CD14-positive monocyte (primary cell): ENCODE measurements at regions of chr17 and their contacts with region 1.

Region 1: DNA sequence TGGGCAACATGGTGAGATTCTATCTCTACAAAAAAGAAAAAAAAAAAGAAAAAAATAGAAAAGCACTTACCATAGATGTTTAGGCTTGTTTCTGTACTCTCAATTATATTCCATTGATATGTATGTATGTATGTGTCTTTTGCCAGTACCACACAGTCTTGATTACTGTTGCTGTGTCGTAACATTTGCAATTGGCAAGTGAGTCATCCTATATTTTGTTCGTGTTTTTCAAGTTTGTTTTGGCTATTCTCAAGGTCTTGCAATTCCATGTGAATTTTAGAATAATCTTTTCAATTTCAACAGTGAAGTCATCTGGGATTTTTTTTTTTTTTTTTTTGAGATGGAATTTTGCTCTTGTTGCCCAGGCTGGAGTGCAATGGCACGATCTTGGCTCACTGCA is 19.3 kb downstream of the SPECC1 start:
- DNase-seq: peak; percentile 57 to 75 (median 64)
- H3K4me3 ChIP-seq: no peak overlapping the region
- H3K4me3 Mint-ChIP-seq: no peak overlapping the region
- H3K27ac ChIP-seq: no peak overlapping the region
- H3K27ac Mint-ChIP-seq: peak overlapping the region in 1 of 7 donors; percentile 69
- H3K4me1 ChIP-seq: peaks cover 29 to 50% of the 10 kb centered on the region in 2 donors
- H3K4me1 Mint-ChIP-seq: peaks cover 44% of the 10 kb centered on the region
- H3K27me3 ChIP-seq: no peaks in the 10 kb centered on the region
- H3K27me3 Mint-ChIP-seq: peaks cover 0 to 1% (median 0%) of the 10 kb centered on the region in 3 donors
- CTCF ChIP-seq: no peak

Region 2: GRCh38 chr17:20063665-20064648 is 35.5 kb after region 1 on chr17:
- intact Hi-C with region 1: loop called (anchors 5 kb)
- DNase-seq: peak; percentile 79 to 89 (median 89)
- H3K4me3 ChIP-seq: peak overlapping the region; percentile 10 to 61 (median 27)
- H3K4me3 Mint-ChIP-seq: peak overlapping the region; percentile 67 to 89
- H3K27ac ChIP-seq: peak overlapping the region; percentile 82 to 87
- H3K27ac Mint-ChIP-seq: peak overlapping the region; percentile 93 to 99 (median 96)
- H3K4me1 ChIP-seq: peaks cover 53 to 57% of the 10 kb centered on the region in 2 donors
- H3K4me1 Mint-ChIP-seq: peaks cover 59% of the 10 kb centered on the region
- H3K27me3 ChIP-seq: no peaks in the 10 kb centered on the region
- H3K27me3 Mint-ChIP-seq: peaks cover 0 to 2% (median 0%) of the 10 kb centered on the region in 3 donors
- CTCF ChIP-seq: no peak

Region 3: GRCh38 chr17:20073055-20073979 is 44.9 kb after region 1 on chr17:
- intact Hi-C with region 1: loop called in 1 of 2 experiments (anchors 5 kb)
- DNase-seq: peak; percentile 61 to 74 (median 66)
- H3K4me3 ChIP-seq: peak overlapping the region; percentile 58 to 100 (median 96)
- H3K4me3 Mint-ChIP-seq: peak overlapping the region; percentile 89 to 94
- H3K27ac ChIP-seq: peak overlapping the region; percentile 72 to 85
- H3K27ac Mint-ChIP-seq: peak overlapping the region; percentile 91 to 96 (median 94)
- H3K4me1 ChIP-seq: peaks cover 58 to 78% of the 10 kb centered on the region in 2 donors
- H3K4me1 Mint-ChIP-seq: peaks cover 86% of the 10 kb centered on the region
- H3K27me3 ChIP-seq: no peaks in the 10 kb centered on the region
- H3K27me3 Mint-ChIP-seq: no peaks in the 10 kb centered on the region
- CTCF ChIP-seq: no peak

Region 4: DNA sequence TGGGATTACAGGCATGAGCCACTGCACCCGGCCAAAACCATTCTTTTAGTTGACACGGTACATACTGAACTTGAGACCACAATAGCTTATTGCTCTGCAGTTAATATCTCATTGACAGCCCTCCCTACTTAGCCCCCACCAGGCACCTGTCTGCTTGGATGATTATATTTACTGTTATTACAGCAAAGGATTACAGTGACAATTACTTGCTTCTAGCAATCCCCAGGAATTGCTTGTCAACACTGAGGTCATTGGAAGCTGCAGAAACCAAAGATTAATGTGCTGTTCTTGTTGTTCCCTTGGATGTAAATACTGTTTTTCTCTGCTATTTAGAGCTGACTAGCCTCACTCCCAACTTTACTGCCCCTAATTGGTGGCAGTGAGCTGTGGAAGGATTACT is 227.7 kb after region 1 on chr17:
- intact Hi-C with region 1: no loop called
- DNase-seq: no peak
- H3K4me3 ChIP-seq: no peak overlapping the region
- H3K4me3 Mint-ChIP-seq: no peak overlapping the region
- H3K27ac ChIP-seq: no peak overlapping the region
- H3K27ac Mint-ChIP-seq: no peak overlapping the region
- H3K4me1 ChIP-seq: peaks cover 0 to 3% of the 10 kb centered on the region in 2 donors
- H3K4me1 Mint-ChIP-seq: peaks cover 7% of the 10 kb centered on the region
- H3K27me3 ChIP-seq: no peaks in the 10 kb centered on the region
- H3K27me3 Mint-ChIP-seq: peaks cover 0 to 1% (median 0%) of the 10 kb centered on the region in 3 donors
- CTCF ChIP-seq: no peak